ENCODE measurements at regions of chr5 and their contacts with region 1.

Region 1: GRCh38 chr5:176388444-176389134 is at the starts of genes HIGD2A and NOP16:
- DNase-seq: peak; percentile 99
- ATAC-seq: peak; percentile 86
- H3K4me3 ChIP-seq: peak within 1 kb of the TSS; percentile 69 to 98 (median 93)
- H3K4me3 Mint-ChIP-seq: peak within 1 kb of the TSS; percentile 100
- H3K27ac ChIP-seq: peak within 1 kb of the TSS; percentile 90 to 93
- H3K27ac Mint-ChIP-seq: peak within 1 kb of the TSS; percentile 100
- H3K4me1 ChIP-seq: peaks cover 19 to 29% of the 10 kb centered on the region in 2 donors
- H3K4me1 Mint-ChIP-seq: peaks cover 26% of the 10 kb centered on the region
- H3K27me3 ChIP-seq: no peaks in the 10 kb centered on the region
- H3K27me3 Mint-ChIP-seq: no peaks in the 10 kb centered on the region
- CTCF ChIP-seq: no peak
- total RNA-seq, gene HIGD2A: 70.1 and 80.1 TPM in 2 replicates
- total RNA-seq, gene NOP16: 25.0 and 25.1 TPM in 2 replicates

Region 2: DNA sequence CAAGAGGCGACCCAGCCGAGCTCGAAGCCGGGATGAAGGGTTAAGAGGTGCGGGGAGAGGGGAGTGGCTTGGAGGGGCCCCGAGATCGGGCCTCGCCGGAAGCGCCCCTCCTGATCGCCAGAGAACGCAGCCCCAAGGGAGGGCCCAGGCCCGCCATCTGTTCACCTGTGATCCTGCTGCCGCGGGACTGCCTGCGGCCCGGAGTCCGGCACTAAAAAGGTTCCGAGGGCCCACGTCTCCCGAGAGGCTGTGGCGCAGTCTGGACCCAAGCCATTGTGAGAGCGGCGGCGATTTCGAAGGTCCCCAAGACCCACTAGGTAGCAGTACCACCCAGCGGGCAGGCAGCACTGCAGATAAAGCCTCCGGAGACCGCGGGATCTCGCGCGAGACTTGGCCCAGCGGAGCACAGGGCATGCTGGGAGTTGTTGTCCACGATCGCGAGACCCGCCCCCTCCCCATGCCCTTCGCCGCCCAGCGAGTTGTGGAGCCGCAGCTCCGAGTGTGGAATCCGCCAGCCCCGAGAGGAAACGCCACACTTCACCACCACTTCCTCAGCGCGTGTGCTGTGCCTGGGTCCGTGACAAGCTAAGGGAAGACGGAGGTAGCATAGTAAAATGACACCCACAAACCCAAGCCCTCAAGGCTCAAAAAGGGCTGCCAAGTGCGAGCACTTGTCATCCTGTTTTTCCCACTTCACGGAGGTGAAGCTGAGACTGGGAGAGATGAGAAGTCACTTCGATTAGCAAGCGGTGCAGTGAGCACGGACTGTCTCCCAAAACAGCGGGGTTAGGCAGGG is 27.0 kb before region 1 on chr5 and contains the start of gene KIAA1191:
- CTCF ChIA-PET with region 1: interaction called, 4 read pairs
- POLR2A ChIA-PET with region 1: interaction called, 11 read pairs
- intact Hi-C with region 1: loop called (anchors 1 kb)
- DNase-seq: peak; percentile 96
- ATAC-seq: peak; percentile 87
- H3K4me3 ChIP-seq: peak within 1 kb of the TSS; percentile 47 to 94 (median 82)
- H3K4me3 Mint-ChIP-seq: peak within 1 kb of the TSS; percentile 98
- H3K27ac ChIP-seq: peak within 1 kb of the TSS; percentile 77 to 92
- H3K27ac Mint-ChIP-seq: peak within 1 kb of the TSS; percentile 98
- H3K4me1 ChIP-seq: peaks cover 21 to 36% of the 10 kb centered on the region in 2 donors
- H3K4me1 Mint-ChIP-seq: peaks cover 42% of the 10 kb centered on the region
- H3K27me3 ChIP-seq: no peaks in the 10 kb centered on the region
- H3K27me3 Mint-ChIP-seq: no peaks in the 10 kb centered on the region
- CTCF ChIP-seq: peak; percentile 31
- total RNA-seq, gene KIAA1191: 82.9 and 88.1 TPM in 2 replicates

Region 3: GRCh38 chr5:176373100-176373818 is 15.3 kb before region 1 on chr5:
- CTCF ChIA-PET with region 1: no interaction called
- POLR2A ChIA-PET with region 1: no interaction called
- intact Hi-C with region 1: loop called (anchors 2 kb)
- DNase-seq: peak; percentile 55
- ATAC-seq: peak; percentile 77
- H3K4me3 ChIP-seq: no peak overlapping the region
- H3K4me3 Mint-ChIP-seq: no peak overlapping the region
- H3K27ac ChIP-seq: peak overlapping the region in 1 of 2 donors; percentile 47
- H3K27ac Mint-ChIP-seq: peak overlapping the region; percentile 28
- H3K4me1 ChIP-seq: peaks cover 8 to 11% of the 10 kb centered on the region in 2 donors
- H3K4me1 Mint-ChIP-seq: peaks cover 13% of the 10 kb centered on the region
- H3K27me3 ChIP-seq: no peaks in the 10 kb centered on the region
- H3K27me3 Mint-ChIP-seq: no peaks in the 10 kb centered on the region
- CTCF ChIP-seq: no peak

Region 4: GRCh38 chr5:176447982-176448608 is 59.5 kb after region 1 on chr5 and contains the start of gene FAF2:
- CTCF ChIA-PET with region 1: interaction called, 4 read pairs
- POLR2A ChIA-PET with region 1: interaction called, 3 read pairs
- intact Hi-C with region 1: loop called (anchors 1 kb)
- DNase-seq: peak; percentile 99
- ATAC-seq: peak; percentile 91
- H3K4me3 ChIP-seq: peak within 1 kb of the TSS; percentile 77 to 99 (median 99)
- H3K4me3 Mint-ChIP-seq: peak within 1 kb of the TSS; percentile 98
- H3K27ac ChIP-seq: peak within 1 kb of the TSS; percentile 81 to 93
- H3K27ac Mint-ChIP-seq: peak within 1 kb of the TSS; percentile 99
- H3K4me1 ChIP-seq: peaks cover 16 to 20% of the 10 kb centered on the region in 2 donors
- H3K4me1 Mint-ChIP-seq: peaks cover 32% of the 10 kb centered on the region
- H3K27me3 ChIP-seq: no peaks in the 10 kb centered on the region
- H3K27me3 Mint-ChIP-seq: no peaks in the 10 kb centered on the region
- CTCF ChIP-seq: peak; percentile 92
- total RNA-seq, gene FAF2: 35.1 and 41.3 TPM in 2 replicates

Region 5: GRCh38 chr5:176501333-176501732 is 112.7 kb after region 1 on chr5:
- CTCF ChIA-PET with region 1: no interaction called
- POLR2A ChIA-PET with region 1: no interaction called
- intact Hi-C with region 1: no loop called
- DNase-seq: no peak
- ATAC-seq: no peak
- H3K4me3 ChIP-seq: no peak overlapping the region
- H3K4me3 Mint-ChIP-seq: no peak overlapping the region
- H3K27ac ChIP-seq: no peak overlapping the region
- H3K27ac Mint-ChIP-seq: no peak overlapping the region
- H3K4me1 ChIP-seq: no peaks in the 10 kb centered on the region
- H3K4me1 Mint-ChIP-seq: no peaks in the 10 kb centered on the region
- H3K27me3 ChIP-seq: no peaks in the 10 kb centered on the region
- H3K27me3 Mint-ChIP-seq: no peaks in the 10 kb centered on the region
- CTCF ChIP-seq: no peak

Region 6: GRCh38 chr5:176527246-176528222 is 138.9 kb after region 1 on chr5:
- CTCF ChIA-PET with region 1: no interaction called
- POLR2A ChIA-PET with region 1: no interaction called
- intact Hi-C with region 1: no loop called
- DNase-seq: no peak
- ATAC-seq: no peak
- H3K4me3 ChIP-seq: no peak overlapping the region
- H3K4me3 Mint-ChIP-seq: no peak overlapping the region
- H3K27ac ChIP-seq: no peak overlapping the region
- H3K27ac Mint-ChIP-seq: peak overlapping the region; percentile 79
- H3K4me1 ChIP-seq: peaks cover 34 to 39% of the 10 kb centered on the region in 2 donors
- H3K4me1 Mint-ChIP-seq: peaks cover 37% of the 10 kb centered on the region
- H3K27me3 ChIP-seq: no peaks in the 10 kb centered on the region
- H3K27me3 Mint-ChIP-seq: no peaks in the 10 kb centered on the region
- CTCF ChIP-seq: no peak

Region 7: GRCh38 chr5:176537608-176538504 is 149.3 kb after region 1 on chr5:
- CTCF ChIA-PET with region 1: interaction called, 3 read pairs
- POLR2A ChIA-PET with region 1: interaction called, 16 read pairs
- intact Hi-C with region 1: loop called (anchors 1 kb)
- DNase-seq: peak; percentile 99
- ATAC-seq: peak; percentile 70
- H3K4me3 ChIP-seq: peak overlapping the region; percentile 84 to 100 (median 94)
- H3K4me3 Mint-ChIP-seq: peak overlapping the region; percentile 99
- H3K27ac ChIP-seq: peak overlapping the region; percentile 93 to 99
- H3K27ac Mint-ChIP-seq: peak overlapping the region; percentile 100
- H3K4me1 ChIP-seq: peaks cover 50 to 59% of the 10 kb centered on the region in 2 donors
- H3K4me1 Mint-ChIP-seq: peaks cover 70% of the 10 kb centered on the region
- H3K27me3 ChIP-seq: no peaks in the 10 kb centered on the region
- H3K27me3 Mint-ChIP-seq: no peaks in the 10 kb centered on the region
- CTCF ChIP-seq: no peak

Region 8: GRCh38 chr5:177006265-177006972 is 617.8 kb after region 1 on chr5 and contains the start of gene UIMC1:
- CTCF ChIA-PET with region 1: no interaction called
- POLR2A ChIA-PET with region 1: no interaction called
- intact Hi-C with region 1: loop called (anchors 5 kb)
- DNase-seq: peak; percentile 96
- ATAC-seq: peak; percentile 90
- H3K4me3 ChIP-seq: peak within 1 kb of the TSS; percentile 74 to 100 (median 95)
- H3K4me3 Mint-ChIP-seq: peak within 1 kb of the TSS; percentile 96
- H3K27ac ChIP-seq: peak within 1 kb of the TSS; percentile 90 to 94
- H3K27ac Mint-ChIP-seq: peak within 1 kb of the TSS; percentile 96
- H3K4me1 ChIP-seq: peaks cover 19 to 29% of the 10 kb centered on the region in 2 donors
- H3K4me1 Mint-ChIP-seq: peaks cover 32% of the 10 kb centered on the region
- H3K27me3 ChIP-seq: no peaks in the 10 kb centered on the region
- H3K27me3 Mint-ChIP-seq: no peaks in the 10 kb centered on the region
- CTCF ChIP-seq: no peak
- total RNA-seq, gene UIMC1: 83.5 and 98.1 TPM in 2 replicates